ENCODE measurements at regions of chr14 and their contacts with region 1.

Region 1: GRCh38 chr14:74945823-74946682 is 9.3 kb downstream of the PGF start:
- DNase-seq: peak; percentile 82
- H3K4me3 Mint-ChIP-seq: no peak overlapping the region
- H3K27ac Mint-ChIP-seq: peak overlapping the region; percentile 2
- H3K4me1 Mint-ChIP-seq: peaks cover 30% of the 10 kb centered on the region
- H3K27me3 Mint-ChIP-seq: no peaks in the 10 kb centered on the region

Region 2: DNA sequence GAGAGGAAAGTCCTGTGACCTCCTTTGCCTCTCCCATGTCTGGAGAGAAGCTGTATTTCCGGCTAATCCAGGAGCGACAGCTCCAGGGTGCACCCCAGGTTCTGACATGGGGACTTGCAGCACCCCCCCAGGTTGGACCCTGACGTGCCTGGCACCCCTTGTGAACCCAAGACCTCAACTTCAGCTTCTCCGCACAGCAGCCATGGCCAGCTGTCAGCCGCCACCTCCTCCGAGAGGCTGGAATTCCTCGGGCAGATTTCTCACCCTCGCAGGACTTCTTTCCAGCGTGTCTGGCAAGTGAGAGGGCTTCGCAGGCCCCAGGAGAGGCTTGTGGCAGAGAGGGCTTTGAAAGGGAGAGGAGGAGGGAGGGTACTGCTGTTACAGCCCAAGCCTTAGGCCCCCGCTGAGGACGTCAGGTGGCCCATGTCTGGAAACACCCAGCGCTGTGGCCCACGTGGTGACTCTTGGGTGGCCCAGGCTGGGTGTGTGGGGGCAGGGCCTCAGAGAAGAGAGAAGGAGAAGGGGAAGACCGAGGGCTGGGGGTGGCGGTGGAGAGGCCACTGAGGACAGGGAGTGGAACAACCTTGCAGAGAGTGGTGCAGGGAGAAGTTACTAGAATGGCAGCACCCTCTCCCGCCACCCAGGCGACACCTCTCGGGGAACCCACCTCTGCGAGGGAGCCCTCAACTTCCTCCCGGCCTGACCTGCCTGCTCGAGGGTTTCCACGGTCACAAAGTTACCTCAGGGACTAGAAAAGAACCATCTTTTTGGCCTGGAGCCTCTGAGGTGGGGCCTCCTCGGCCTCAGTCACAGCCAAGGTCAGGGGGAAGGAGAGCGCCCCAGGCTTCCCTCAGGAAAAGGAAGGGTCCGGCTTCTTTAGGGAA is 11.3 kb before region 1 on chr14:
- CTCF ChIA-PET with region 1: interaction called, 32 read pairs
- POLR2A ChIA-PET with region 1: no interaction called
- DNase-seq: no peak
- H3K4me3 Mint-ChIP-seq: no peak overlapping the region
- H3K27ac Mint-ChIP-seq: no peak overlapping the region
- H3K4me1 Mint-ChIP-seq: peaks cover 27% of the 10 kb centered on the region
- H3K27me3 Mint-ChIP-seq: peaks cover 5% of the 10 kb centered on the region